ENCODE measurements at regions of chr1 and their contacts with region 1.

Region 1: DNA sequence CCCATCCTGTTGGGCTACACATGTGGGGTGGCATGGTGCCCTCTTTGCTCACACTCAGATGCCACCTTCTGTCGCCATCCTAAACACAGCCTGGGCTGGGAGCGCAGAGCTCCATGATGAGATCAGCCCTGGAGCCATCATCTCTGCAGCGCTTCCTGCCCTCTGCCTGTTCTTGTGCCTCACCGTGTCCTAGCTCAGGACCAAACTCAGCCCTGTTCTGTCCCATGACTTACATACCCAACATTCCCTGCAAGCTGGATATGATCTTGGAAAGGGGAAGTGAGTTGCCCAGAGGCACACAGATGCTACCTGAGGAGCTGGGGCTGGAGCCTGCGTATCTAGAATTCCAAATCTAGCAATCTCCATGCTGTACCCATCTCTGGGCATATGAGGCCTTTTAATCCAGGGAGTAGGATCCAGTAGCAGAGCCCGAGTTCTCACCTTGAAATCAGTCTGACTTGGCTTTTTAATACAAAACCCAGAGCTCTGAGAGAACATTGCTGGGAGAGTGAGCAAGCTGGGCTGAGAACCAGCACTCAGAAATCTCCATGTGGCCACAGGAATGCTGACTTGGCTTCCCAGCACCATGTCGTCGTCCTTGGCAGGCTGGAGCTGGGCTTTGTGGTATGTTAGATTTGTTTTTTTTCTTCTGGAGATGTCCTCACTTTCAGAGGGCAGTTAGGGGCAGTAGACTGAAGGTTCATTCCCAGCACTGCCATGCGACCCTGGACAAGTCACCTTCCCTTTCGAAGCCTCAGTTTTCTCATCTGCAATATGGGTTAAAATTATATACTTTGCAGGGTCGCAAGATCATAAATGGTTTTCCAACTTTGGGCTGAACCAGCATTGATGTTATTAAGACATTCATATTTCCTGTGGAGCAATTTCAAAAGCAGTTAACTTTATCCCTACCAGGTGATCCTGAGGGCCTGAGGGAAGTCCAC is 2.6 kb downstream of the ALPL start:
- DNase-seq: peak; percentile 81
- ATAC-seq: peak; percentile 59
- H3K4me3 ChIP-seq: peak overlapping the region; percentile 47
- H3K27ac ChIP-seq: peak overlapping the region; percentile 68
- H3K4me1 ChIP-seq: peaks cover 22% of the 10 kb centered on the region
- H3K27me3 ChIP-seq: peaks cover 19% of the 10 kb centered on the region
- CTCF ChIP-seq: no peak

Region 2: GRCh38 chr1:21552715-21553114 is 40.9 kb after region 1 on chr1:
- intact Hi-C with region 1: no loop called
- DNase-seq: no peak
- ATAC-seq: peak; percentile 27
- H3K4me3 ChIP-seq: no peak overlapping the region
- H3K27ac ChIP-seq: no peak overlapping the region
- H3K4me1 ChIP-seq: peaks cover 13% of the 10 kb centered on the region
- H3K27me3 ChIP-seq: no peaks in the 10 kb centered on the region
- CTCF ChIP-seq: no peak

Region 3: GRCh38 chr1:21573971-21574465 is 62.2 kb after region 1 on chr1:
- intact Hi-C with region 1: loop called (anchors 10 kb)
- DNase-seq: peak; percentile 79
- ATAC-seq: peak; percentile 58
- H3K4me3 ChIP-seq: no peak overlapping the region
- H3K27ac ChIP-seq: peak overlapping the region; percentile 76
- H3K4me1 ChIP-seq: peaks cover 3% of the 10 kb centered on the region
- H3K27me3 ChIP-seq: no peaks in the 10 kb centered on the region
- CTCF ChIP-seq: peak; percentile 53

Measured in upper lobe of right lung (tissue), 1 donor.